ENCODE measurements at regions of chr15 and their contacts with region 1.

Region 1: GRCh38 chr15:62799919-62800318 is 242.6 kb upstream of the TPM1 start:
- DNase-seq: no peak
- ATAC-seq: no peak
- H3K4me3 ChIP-seq: no peak overlapping the region
- H3K27ac ChIP-seq: 0 out of 6 replicates have a peak overlapping the region, but pooled peaks of 1 of the 2 experiments have one; percentile 1
- H3K4me1 ChIP-seq: no peaks in the 10 kb centered on the region
- CTCF ChIP-seq: no peak
- EP300 ChIP-seq: no peak
- POLR2A ChIP-seq: no peak
- RAD21 ChIP-seq: no peak

Region 2: GRCh38 chr15:62816342-62817069 is 16.6 kb after region 1 on chr15:
- CTCF ChIA-PET with region 1: interaction called, 10 read pairs
- POLR2A ChIA-PET with region 1: no interaction called
- DNase-seq: no peak
- ATAC-seq: no peak
- H3K4me3 ChIP-seq: no peak overlapping the region
- H3K27ac ChIP-seq: no peak overlapping the region
- H3K4me1 ChIP-seq: peaks cover 19% of the 10 kb centered on the region
- CTCF ChIP-seq: no peak
- EP300 ChIP-seq: no peak
- POLR2A ChIP-seq: no peak
- RAD21 ChIP-seq: no peak

Measured in A549 (cell line).